Naive thymus-derived CD4-positive, alpha-beta T cell (primary cell): ENCODE measurements at regions of chr20 and their contacts with region 1.

Region 1: GRCh38 chr20:11734431-11734830 is 183.3 kb upstream of the BTBD3 start:
- DNase-seq: no peak
- ATAC-seq: no peak
- H3K4me3 ChIP-seq: no peak overlapping the region
- H3K4me3 Mint-ChIP-seq: no peak overlapping the region
- H3K27ac ChIP-seq: no peak overlapping the region
- H3K27ac Mint-ChIP-seq: no peak overlapping the region
- H3K4me1 ChIP-seq: no peaks in the 10 kb centered on the region
- H3K4me1 Mint-ChIP-seq: no peaks in the 10 kb centered on the region
- H3K27me3 ChIP-seq: no peaks in the 10 kb centered on the region
- H3K27me3 Mint-ChIP-seq: no peaks in the 10 kb centered on the region

Region 2: DNA sequence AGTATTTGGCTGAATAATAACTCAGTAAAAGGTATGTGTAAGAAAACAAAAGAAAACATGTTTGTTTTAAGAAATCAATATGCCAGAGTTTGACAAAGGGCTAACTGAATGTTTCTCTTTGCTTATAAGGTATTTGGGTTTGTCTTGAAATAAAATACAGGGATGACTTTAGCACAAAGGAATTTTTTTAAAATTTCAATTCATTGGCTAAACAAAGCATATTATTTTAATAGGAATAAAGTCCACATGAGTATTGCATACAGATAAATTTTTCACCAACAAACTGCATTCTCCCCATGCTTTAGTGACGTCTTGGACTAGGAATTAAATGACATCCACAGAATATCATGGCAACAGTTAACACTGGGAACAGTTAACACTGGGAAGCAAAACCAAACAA is 580.6 kb before region 1 on chr20:
- CTCF ChIA-PET with region 1: no interaction called
- POLR2A ChIA-PET with region 1: no interaction called
- intact Hi-C with region 1: no loop called
- DNase-seq: no peak
- ATAC-seq: no peak
- H3K4me3 ChIP-seq: no peak overlapping the region
- H3K4me3 Mint-ChIP-seq: no peak overlapping the region
- H3K27ac ChIP-seq: no peak overlapping the region
- H3K27ac Mint-ChIP-seq: no peak overlapping the region
- H3K4me1 ChIP-seq: no peaks in the 10 kb centered on the region
- H3K4me1 Mint-ChIP-seq: no peaks in the 10 kb centered on the region
- H3K27me3 ChIP-seq: no peaks in the 10 kb centered on the region
- H3K27me3 Mint-ChIP-seq: no peaks in the 10 kb centered on the region

Region 3: DNA sequence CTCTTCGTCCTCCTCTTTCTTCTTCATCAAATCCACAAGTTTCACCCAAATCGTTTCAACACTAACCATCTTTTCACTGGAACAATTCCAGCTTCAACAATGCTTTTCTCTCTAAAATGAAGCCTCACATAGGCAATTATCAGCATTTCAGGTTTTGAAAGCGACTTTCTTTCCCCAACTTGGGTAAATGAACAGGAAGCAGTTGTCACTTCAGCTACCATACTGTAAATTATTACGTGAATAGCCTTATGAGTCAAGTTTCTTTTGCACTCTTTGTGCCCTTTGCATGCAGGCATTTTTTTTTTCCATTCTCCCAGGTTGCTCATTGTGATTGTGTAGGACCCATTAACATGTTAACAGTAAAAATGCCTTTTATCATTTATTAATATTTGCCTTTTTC is 61.6 kb after region 1 on chr20:
- CTCF ChIA-PET with region 1: no interaction called
- POLR2A ChIA-PET with region 1: no interaction called
- intact Hi-C with region 1: loop called in 1 of 2 experiments (anchors 10 kb)
- DNase-seq: no peak
- ATAC-seq: no peak
- H3K4me3 ChIP-seq: no peak overlapping the region
- H3K4me3 Mint-ChIP-seq: no peak overlapping the region
- H3K27ac ChIP-seq: no peak overlapping the region
- H3K27ac Mint-ChIP-seq: no peak overlapping the region
- H3K4me1 ChIP-seq: no peaks in the 10 kb centered on the region
- H3K4me1 Mint-ChIP-seq: no peaks in the 10 kb centered on the region
- H3K27me3 ChIP-seq: no peaks in the 10 kb centered on the region
- H3K27me3 Mint-ChIP-seq: peaks cover 0 to 4% (median 0%) of the 10 kb centered on the region in 5 donors